Activated CD4-positive, alpha-beta T cell treated with anti-CD3 and anti-CD28 coated beads for 36 hours (primary cell): ENCODE measurements at regions of chr2 and their contacts with region 1.

Region 1: GRCh38 chr2:113080134-113080533 is 12.4 kb downstream of the IL1F10 start:
- DNase-seq: peak; percentile 73
- ATAC-seq: peak; percentile 73
- H3K4me3 Mint-ChIP-seq: no peak overlapping the region
- H3K27ac Mint-ChIP-seq: no peak overlapping the region
- H3K4me1 Mint-ChIP-seq: peaks cover 15% of the 10 kb centered on the region
- H3K27me3 Mint-ChIP-seq: no peaks in the 10 kb centered on the region

Region 2: DNA sequence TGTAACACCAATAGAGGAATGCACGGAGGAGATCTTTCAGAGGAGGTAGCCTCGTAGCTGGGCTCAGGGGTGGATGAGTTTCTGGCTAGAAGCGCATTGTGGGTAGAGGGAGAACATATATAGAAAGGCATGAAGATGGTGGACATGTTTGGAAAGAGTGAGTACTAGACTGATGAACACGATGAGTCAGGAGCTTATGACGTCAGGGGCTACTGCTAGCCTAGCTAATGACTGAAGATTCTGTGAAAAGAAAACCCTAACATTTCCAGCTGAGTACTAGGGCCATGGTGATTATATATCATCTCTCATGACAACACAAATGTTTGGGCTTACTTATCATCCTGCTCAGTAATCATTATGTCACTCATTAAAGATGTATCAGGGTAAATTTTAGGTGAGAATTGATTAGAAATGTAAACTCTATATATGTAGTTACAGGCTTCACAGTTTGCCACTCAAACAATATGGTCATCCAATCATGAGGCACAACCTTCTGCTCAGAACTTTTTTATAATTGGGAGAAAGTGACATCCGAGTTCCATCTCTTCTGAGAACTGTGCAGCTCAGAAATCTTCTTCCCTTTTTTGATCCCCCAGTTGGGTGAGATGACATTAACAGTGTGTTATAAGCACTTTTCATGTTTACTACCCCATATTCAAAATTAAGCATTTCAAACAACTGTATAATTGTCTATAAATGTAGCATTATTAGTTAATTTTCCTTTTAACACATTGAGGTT is 25.1 kb after region 1 on chr2:
- CTCF ChIA-PET with region 1: interaction called, 14 read pairs
- POLR2A ChIA-PET with region 1: no interaction called
- intact Hi-C with region 1: no loop called
- DNase-seq: peak; percentile 73
- ATAC-seq: peak; percentile 59
- H3K4me3 Mint-ChIP-seq: no peak overlapping the region
- H3K27ac Mint-ChIP-seq: peak overlapping the region; percentile 93
- H3K4me1 Mint-ChIP-seq: peaks cover 39% of the 10 kb centered on the region
- H3K27me3 Mint-ChIP-seq: peaks cover 4% of the 10 kb centered on the region

Region 3: DNA sequence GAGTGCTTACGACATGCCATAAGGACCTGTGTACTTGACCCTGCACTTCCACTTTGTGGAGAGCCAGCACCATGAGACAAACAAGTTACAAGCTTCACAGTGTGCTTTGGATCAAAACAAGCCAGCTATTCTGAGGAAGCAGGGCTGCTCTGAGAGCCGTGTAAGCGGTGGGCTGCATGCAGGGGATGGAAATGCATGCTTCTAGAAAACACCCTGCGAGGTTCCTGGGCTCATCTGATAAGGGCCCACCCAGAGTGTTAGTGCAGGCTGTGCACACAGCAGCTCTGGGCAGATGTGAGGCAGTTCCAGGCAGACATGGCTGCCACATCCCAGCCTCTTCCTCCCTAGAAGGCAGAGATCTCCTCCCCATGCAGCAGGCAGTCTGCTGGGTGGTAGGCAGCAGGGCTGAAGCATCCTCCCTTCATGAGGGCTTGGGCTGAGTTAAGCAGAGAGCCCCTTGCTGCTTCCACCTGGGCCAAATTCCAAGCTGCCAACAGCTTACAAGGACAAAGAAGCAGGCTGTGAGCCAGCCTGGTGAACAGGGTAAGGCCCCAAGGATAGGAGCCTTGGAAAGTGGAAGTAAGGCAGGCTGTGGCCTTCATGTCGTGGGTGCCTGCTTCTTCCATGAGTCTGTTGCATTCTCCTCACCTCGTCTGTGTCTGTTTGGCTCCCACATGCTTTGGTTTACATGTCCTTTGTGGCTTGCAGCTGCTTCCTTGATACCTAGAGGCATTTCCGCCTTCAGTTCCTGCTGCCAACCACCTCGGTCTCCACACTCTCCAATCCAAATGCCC is 101.3 kb after region 1 on chr2:
- CTCF ChIA-PET with region 1: interaction called, 13 read pairs
- POLR2A ChIA-PET with region 1: no interaction called
- intact Hi-C with region 1: loop called in 1 of 2 experiments (anchors 2 kb)
- DNase-seq: no peak
- ATAC-seq: no peak
- H3K4me3 Mint-ChIP-seq: peak overlapping the region; percentile 32
- H3K27ac Mint-ChIP-seq: peak overlapping the region; percentile 85
- H3K4me1 Mint-ChIP-seq: peaks cover 91% of the 10 kb centered on the region
- H3K27me3 Mint-ChIP-seq: no peaks in the 10 kb centered on the region

Region 4: GRCh38 chr2:113198790-113199612 is 118.9 kb after region 1 on chr2:
- CTCF ChIA-PET with region 1: interaction called, 24 read pairs
- POLR2A ChIA-PET with region 1: no interaction called
- intact Hi-C with region 1: loop called (anchors 2 to 5 kb)
- DNase-seq: peak; percentile 88
- ATAC-seq: peak; percentile 70
- H3K4me3 Mint-ChIP-seq: no peak overlapping the region
- H3K27ac Mint-ChIP-seq: no peak overlapping the region
- H3K4me1 Mint-ChIP-seq: peaks cover 8% of the 10 kb centered on the region
- H3K27me3 Mint-ChIP-seq: no peaks in the 10 kb centered on the region

Region 5: DNA sequence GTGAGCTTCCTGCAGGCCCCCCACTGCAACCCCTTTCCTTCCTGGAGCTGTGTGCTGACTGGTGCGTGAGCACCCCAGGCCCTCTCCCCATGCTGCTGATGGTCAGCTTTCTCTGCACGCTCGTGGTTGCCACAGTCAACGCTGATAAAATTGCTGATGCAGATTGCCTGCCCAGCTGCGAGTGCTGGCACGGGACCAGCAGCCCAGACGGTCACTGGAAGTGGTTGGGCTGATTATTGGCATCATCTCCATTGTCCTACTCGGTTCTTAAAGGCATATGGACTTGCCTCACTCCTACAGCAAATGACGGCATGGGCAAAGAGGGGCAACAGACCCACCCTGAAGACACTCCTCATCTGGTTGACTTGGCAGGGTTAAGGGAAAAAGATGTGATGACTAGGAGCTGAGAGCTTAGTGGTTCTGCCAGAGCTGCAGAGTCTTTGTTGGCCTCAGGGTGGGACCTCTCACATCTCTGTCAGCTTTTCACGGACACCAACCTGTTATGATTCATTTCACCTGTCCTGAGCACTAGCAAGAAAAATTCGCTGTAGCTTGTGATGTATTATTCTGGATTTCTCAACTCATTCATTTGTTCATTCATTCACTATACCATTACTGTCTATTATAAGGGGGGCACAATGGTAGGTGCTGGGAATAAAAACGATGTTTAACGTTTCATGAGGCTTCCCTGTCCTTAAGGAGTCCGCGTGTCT is 160.2 kb after region 1 on chr2:
- CTCF ChIA-PET with region 1: interaction called, 8 read pairs
- POLR2A ChIA-PET with region 1: no interaction called
- intact Hi-C with region 1: loop called in 1 of 2 experiments (anchors 5 kb)
- DNase-seq: peak; percentile 31
- ATAC-seq: peak; percentile 64
- H3K4me3 Mint-ChIP-seq: no peak overlapping the region
- H3K27ac Mint-ChIP-seq: peak overlapping the region; percentile 79
- H3K4me1 Mint-ChIP-seq: peaks cover 23% of the 10 kb centered on the region
- H3K27me3 Mint-ChIP-seq: no peaks in the 10 kb centered on the region

Region 6: GRCh38 chr2:113370478-113371091 is 290.5 kb after region 1 on chr2:
- CTCF ChIA-PET with region 1: interaction called, 9 read pairs
- POLR2A ChIA-PET with region 1: no interaction called
- intact Hi-C with region 1: loop called (anchors 5 kb)
- DNase-seq: peak; percentile 78
- ATAC-seq: peak; percentile 98
- H3K4me3 Mint-ChIP-seq: no peak overlapping the region
- H3K27ac Mint-ChIP-seq: no peak overlapping the region
- H3K4me1 Mint-ChIP-seq: peaks cover 7% of the 10 kb centered on the region
- H3K27me3 Mint-ChIP-seq: peaks cover 2% of the 10 kb centered on the region